Activated T-helper 1 cell treated with anti-CD3 and anti-CD28 coated beads, Interleukin-12 subunit alpha, Interleukin-12 subunit beta, Interleukin-2, Interleukin-4 antibody, amounts not matched to agents 30 ng/mL and 10 ng/mL and 1 ng/mL, durations not matched to agents 14 hours and 24 hours and 36 hours (primary cell): ENCODE measurements at regions of chr9 and their contacts with region 1.

Region 1: DNA sequence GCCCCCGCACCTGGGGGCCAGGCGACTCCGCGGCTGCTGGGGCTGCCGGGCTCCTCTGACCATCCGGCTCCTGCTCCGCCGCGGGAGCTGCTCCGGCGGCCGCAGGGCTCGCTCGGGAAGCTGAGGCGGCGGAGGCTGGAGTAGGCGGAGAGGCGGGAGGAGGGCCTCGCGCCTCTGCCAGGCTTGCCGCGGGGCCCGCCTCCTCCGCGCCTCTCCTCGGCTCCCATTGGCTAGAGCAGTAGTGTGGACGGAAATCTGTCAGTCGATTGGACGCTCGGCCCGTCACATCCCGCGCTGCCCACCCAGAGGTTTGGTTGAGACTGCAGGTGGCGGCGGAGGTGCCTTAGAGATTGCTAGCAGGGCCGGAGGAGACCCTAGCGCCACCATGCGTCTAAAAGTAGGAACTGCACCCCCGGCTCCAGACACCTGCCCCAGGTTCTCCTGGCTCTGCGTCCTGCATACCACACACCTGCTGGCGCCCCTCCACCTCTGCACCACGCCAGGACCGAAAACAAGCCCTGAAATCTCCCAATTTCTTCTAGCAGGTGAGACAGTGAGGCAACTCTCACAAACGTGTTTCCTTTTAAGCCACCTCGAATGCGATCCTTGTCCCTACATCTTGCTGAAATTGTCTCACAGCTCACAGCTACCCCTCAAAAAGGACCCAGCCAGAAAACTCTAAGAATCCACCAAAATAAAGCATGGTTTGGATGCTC is at the start of gene SCAI:
- DNase-seq: peak; percentile 98
- H3K4me3 Mint-ChIP-seq: peak within 1 kb of the TSS; percentile 96
- H3K27ac Mint-ChIP-seq: peak within 1 kb of the TSS; percentile 85
- H3K4me1 Mint-ChIP-seq: peaks cover 46% of the 10 kb centered on the region
- H3K27me3 Mint-ChIP-seq: no peaks in the 10 kb centered on the region
- total RNA-seq, gene SCAI: 10.0 and 11.7 TPM in 2 replicates

Region 2: GRCh38 chr9:124861342-124862229 is 281.9 kb before region 1 on chr9 and contains the starts of genes ARPC5L and RPL35:
- intact Hi-C with region 1: loop called (anchors 1 kb)
- DNase-seq: peak; percentile 95
- H3K4me3 Mint-ChIP-seq: peak within 1 kb of the TSS; percentile 96
- H3K27ac Mint-ChIP-seq: peak within 1 kb of the TSS; percentile 98
- H3K4me1 Mint-ChIP-seq: peaks cover 35% of the 10 kb centered on the region
- H3K27me3 Mint-ChIP-seq: no peaks in the 10 kb centered on the region
- total RNA-seq, gene ARPC5L: 111 and 115 TPM in 2 replicates
- total RNA-seq, gene RPL35: 1,681 and 1,750 TPM in 2 replicates

Region 3: DNA sequence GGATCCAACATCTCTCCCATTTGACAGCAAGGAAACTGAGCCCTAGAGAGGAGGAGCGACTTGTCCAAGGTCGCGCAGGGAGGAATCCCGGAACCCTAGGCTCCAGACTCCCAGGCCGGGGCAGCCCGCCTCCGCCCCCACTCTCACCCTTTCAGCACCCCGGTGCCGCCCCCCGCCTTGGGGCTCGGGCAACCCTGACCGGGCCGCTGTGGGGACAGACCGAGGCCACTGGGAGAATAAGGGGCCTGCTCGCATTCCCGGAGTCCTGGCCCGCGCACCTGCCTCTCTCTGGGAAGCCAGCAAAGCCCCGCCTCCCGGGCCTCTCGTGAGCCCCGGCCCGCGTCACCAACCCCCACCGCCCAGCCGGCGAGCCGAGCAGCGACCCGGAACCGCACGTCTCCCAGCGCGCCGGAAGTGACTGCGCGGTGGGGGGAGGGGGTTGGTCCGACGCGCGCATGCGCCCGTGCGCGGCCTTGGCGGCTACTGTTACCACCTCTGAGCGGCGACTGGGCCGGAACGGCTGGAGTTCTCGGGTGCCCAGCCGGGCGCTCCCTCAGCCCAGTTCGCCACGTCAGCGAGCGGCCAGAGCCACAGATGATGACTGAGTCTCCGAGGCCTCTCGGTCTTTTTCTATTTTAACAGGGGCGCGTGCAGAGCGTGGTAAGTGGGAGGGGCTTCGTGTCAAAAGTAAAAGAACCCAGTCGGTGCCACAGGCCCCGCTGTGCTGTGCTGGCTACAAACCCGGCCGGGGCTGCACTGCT is 202.7 kb before region 1 on chr9 and contains the start of gene GOLGA1:
- intact Hi-C with region 1: loop called (anchors 1 kb)
- DNase-seq: peak; percentile 92
- H3K4me3 Mint-ChIP-seq: peak within 1 kb of the TSS; percentile 94
- H3K27ac Mint-ChIP-seq: peak within 1 kb of the TSS; percentile 99
- H3K4me1 Mint-ChIP-seq: peaks cover 29% of the 10 kb centered on the region
- H3K27me3 Mint-ChIP-seq: no peaks in the 10 kb centered on the region
- total RNA-seq, gene GOLGA1: 16.6 TPM in 2 replicates

Region 4: DNA sequence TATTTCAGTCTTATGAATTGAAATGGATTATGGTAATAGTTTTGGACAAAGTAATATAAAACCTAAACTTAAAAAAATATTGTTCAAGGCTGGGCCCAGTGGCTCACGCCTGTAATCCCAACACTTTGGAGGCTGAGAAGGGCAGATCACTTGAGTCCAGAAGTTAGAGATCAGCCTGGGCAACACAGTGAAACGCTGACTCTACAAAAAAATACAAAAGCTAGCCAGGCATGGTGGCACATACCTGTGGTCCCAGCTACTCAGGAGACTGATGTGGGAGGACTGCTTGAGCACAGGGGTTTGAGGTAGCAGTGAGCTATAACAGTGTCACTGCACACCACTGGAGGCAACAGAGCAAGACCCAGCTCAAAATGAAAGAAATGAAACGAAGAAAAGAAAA is 82.1 kb before region 1 on chr9:
- intact Hi-C with region 1: no loop called
- DNase-seq: no peak
- H3K4me3 Mint-ChIP-seq: no peak overlapping the region
- H3K27ac Mint-ChIP-seq: no peak overlapping the region
- H3K4me1 Mint-ChIP-seq: no peaks in the 10 kb centered on the region
- H3K27me3 Mint-ChIP-seq: no peaks in the 10 kb centered on the region

Region 5: GRCh38 chr9:125126019-125126746 is 17.4 kb before region 1 on chr9:
- intact Hi-C with region 1: loop called (anchors 1 kb)
- DNase-seq: peak; percentile 77
- H3K4me3 Mint-ChIP-seq: peak overlapping the region; percentile 62
- H3K27ac Mint-ChIP-seq: peak overlapping the region; percentile 98
- H3K4me1 Mint-ChIP-seq: peaks cover 36% of the 10 kb centered on the region
- H3K27me3 Mint-ChIP-seq: no peaks in the 10 kb centered on the region

Region 6: DNA sequence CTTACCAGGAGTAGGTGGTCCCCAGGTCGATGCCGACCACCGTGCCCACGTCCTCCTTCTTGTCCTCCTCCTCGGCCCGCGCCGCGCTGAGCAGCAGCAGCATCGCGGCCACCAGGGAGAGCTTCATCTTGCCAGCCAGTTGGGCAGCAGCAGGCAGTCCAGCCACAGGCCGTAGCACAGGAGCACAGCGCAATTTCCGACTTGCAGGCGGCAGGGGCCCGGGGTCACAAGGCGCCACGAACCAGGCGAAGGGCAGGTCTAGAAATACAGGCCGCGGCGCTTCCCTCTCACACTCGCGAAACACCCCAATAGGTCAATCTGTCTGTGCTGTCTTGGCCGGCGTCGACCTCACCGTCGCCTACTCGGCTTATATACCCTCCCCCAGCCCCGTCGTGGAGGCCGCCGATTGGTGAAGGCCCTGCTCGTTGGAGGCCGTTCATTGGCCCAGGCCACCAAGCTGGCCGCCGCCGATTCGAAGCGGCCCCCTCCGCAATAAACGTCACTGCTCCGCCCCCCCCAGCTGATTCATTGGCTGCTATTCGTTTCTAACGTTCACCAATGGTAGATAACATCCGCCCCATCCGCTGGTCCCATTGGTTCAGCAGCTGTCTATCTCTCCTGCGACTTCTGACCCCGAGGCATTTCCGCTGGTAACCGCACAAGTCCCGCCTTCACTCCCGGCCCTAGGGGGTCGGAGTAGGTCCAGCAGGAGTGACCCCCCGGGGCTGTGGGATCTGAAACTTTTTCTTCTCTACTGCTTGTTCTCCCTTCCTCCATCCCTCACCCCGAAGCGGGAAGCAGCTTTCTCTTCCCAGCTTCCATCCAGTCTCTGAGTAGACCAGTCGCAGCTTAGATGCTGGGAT is 97.7 kb after region 1 on chr9 and contains the start of gene HSPA5:
- intact Hi-C with region 1: loop called (anchors 2 kb)
- DNase-seq: peak; percentile 99
- H3K4me3 Mint-ChIP-seq: peak within 1 kb of the TSS; percentile 96
- H3K27ac Mint-ChIP-seq: peak within 1 kb of the TSS; percentile 96
- H3K4me1 Mint-ChIP-seq: peaks cover 36% of the 10 kb centered on the region
- H3K27me3 Mint-ChIP-seq: no peaks in the 10 kb centered on the region
- total RNA-seq, gene HSPA5: 242 and 243 TPM in 2 replicates

Region 7: GRCh38 chr9:125746017-125746773 is 602.7 kb after region 1 on chr9:
- intact Hi-C with region 1: loop called (anchors 5 kb)
- DNase-seq: peak; percentile 88
- H3K4me3 Mint-ChIP-seq: peak overlapping the region; percentile 88
- H3K27ac Mint-ChIP-seq: peak overlapping the region; percentile 91
- H3K4me1 Mint-ChIP-seq: peaks cover 39% of the 10 kb centered on the region
- H3K27me3 Mint-ChIP-seq: peaks cover 25% of the 10 kb centered on the region